Sigmoid colon (tissue), 7 donors: ENCODE measurements at regions of chr12 and their contacts with region 1.

Region 1: DNA sequence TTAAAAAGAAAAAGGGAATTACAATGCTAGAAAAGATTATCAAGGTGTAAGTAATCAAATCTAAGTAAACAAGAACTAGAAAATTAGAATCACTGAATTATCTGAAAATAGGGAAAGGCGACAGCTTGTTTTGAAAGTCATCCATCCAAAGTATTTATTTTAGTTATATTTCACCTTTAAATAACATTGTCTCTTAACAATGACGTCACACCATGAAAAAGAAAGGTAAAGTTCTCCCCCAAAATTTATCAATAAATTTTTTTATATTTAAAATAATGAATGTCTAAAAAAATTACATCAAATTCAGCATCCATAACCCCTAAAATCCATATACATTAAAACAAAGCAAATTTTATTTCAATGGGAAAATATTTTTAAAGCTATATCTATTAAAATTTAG is 223.2 kb downstream of the RERGL start:
- DNase-seq: no peak
- H3K4me3 ChIP-seq: no peak overlapping the region
- H3K27ac ChIP-seq: no peak overlapping the region
- H3K4me1 ChIP-seq: no peaks in the 10 kb centered on the region
- H3K27me3 ChIP-seq: no peaks in the 10 kb centered on the region
- CTCF ChIP-seq: no peak
- EP300 ChIP-seq: no peak
- POLR2A ChIP-seq: no peak

Region 2: GRCh38 chr12:17778242-17778641 is 88.6 kb before region 1 on chr12:
- intact Hi-C with region 1: loop called (anchors 2 kb)
- DNase-seq: no peak
- H3K4me3 ChIP-seq: no peak overlapping the region
- H3K27ac ChIP-seq: no peak overlapping the region
- H3K4me1 ChIP-seq: no peaks in the 10 kb centered on the region
- H3K27me3 ChIP-seq: no peaks in the 10 kb centered on the region
- CTCF ChIP-seq: no peak
- EP300 ChIP-seq: no peak
- POLR2A ChIP-seq: no peak

Region 3: GRCh38 chr12:18217966-18218365 is 351.2 kb after region 1 on chr12:
- intact Hi-C with region 1: no loop called
- DNase-seq: no peak
- H3K4me3 ChIP-seq: no peak overlapping the region
- H3K27ac ChIP-seq: no peak overlapping the region
- H3K4me1 ChIP-seq: no peaks in the 10 kb centered on the region
- H3K27me3 ChIP-seq: no peaks in the 10 kb centered on the region
- CTCF ChIP-seq: no peak
- EP300 ChIP-seq: no peak
- POLR2A ChIP-seq: no peak